CD14-positive monocyte (primary cell): ENCODE measurements at regions of chr9 and their contacts with region 1.

Region 1: DNA sequence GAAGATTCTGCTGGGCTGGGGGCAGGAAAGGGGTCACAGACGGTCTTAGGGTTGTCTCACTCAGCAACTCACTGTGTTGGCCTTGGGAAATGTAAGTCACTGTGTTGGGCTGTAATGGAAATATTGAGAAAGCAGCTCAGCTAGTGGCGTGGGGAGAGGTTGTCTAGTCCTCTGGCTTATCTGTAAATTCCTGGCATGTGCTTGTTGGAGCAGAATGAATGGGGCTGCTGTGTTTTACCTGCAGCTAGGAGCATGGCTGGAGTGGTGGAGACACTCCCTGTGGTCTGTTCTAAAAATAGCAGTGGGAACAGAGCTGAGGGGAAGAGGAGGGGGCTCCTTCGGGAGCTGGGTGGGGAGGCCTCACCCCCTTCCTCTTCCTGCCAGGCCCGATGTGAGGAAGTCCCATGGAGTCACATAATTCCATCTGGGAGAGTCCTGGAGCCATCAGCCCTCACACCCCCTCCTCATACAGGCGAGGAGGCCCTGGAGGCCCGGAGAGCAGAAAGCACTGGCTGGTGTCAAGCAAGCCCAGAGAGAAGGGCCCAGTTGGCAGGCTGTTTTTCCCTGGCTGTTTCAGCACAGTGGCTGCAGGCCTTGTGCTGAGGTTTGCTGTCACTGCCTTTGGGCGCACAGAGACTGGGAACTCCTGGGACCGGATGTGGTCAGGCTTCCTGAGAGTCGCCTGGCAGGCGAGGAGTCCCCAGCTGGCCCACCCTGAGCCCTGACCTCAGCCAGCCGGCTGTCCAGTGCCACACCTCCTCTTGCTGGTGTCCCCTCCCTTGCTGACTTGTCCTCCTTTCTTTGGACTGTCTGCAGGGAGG is 84.9 kb downstream of the RGS3 start:
- DNase-seq: peak; percentile 19 to 68 (median 44)
- H3K4me3 ChIP-seq: peak overlapping the region in 1 of 3 experiments; percentile 8
- H3K4me3 Mint-ChIP-seq: peak overlapping the region; percentile 49 to 67
- H3K27ac ChIP-seq: peak overlapping the region; percentile 22 to 63
- H3K27ac Mint-ChIP-seq: peak overlapping the region in 6 of 7 donors; percentile 29 to 85 (median 72)
- H3K4me1 ChIP-seq: peaks cover 19 to 21% of the 10 kb centered on the region in 2 donors
- H3K4me1 Mint-ChIP-seq: peaks cover 24% of the 10 kb centered on the region
- H3K27me3 ChIP-seq: no peaks in the 10 kb centered on the region
- H3K27me3 Mint-ChIP-seq: peaks cover 0 to 1% (median 0%) of the 10 kb centered on the region in 3 donors
- CTCF ChIP-seq: no peak

Region 2: GRCh38 chr9:113446323-113446740 is 102.1 kb before region 1 on chr9:
- intact Hi-C with region 1: no loop called
- DNase-seq: peak in 2 of 3 donors; percentile 25 to 52
- H3K4me3 ChIP-seq: no peak overlapping the region
- H3K4me3 Mint-ChIP-seq: no peak overlapping the region
- H3K27ac ChIP-seq: no peak overlapping the region
- H3K27ac Mint-ChIP-seq: no peak overlapping the region
- H3K4me1 ChIP-seq: no peaks in the 10 kb centered on the region
- H3K4me1 Mint-ChIP-seq: no peaks in the 10 kb centered on the region
- H3K27me3 ChIP-seq: no peaks in the 10 kb centered on the region
- H3K27me3 Mint-ChIP-seq: no peaks in the 10 kb centered on the region
- CTCF ChIP-seq: peak; percentile 87

Region 3: GRCh38 chr9:113474360-113475028 is 73.9 kb before region 1 on chr9:
- intact Hi-C with region 1: loop called in 1 of 2 experiments (anchors 5 kb)
- DNase-seq: no peak
- H3K4me3 ChIP-seq: no peak overlapping the region
- H3K4me3 Mint-ChIP-seq: no peak overlapping the region
- H3K27ac ChIP-seq: no peak overlapping the region
- H3K27ac Mint-ChIP-seq: no peak overlapping the region
- H3K4me1 ChIP-seq: no peaks in the 10 kb centered on the region
- H3K4me1 Mint-ChIP-seq: no peaks in the 10 kb centered on the region
- H3K27me3 ChIP-seq: no peaks in the 10 kb centered on the region
- H3K27me3 Mint-ChIP-seq: peaks cover 0 to 2% (median 2%) of the 10 kb centered on the region in 3 donors
- CTCF ChIP-seq: no peak

Region 4: DNA sequence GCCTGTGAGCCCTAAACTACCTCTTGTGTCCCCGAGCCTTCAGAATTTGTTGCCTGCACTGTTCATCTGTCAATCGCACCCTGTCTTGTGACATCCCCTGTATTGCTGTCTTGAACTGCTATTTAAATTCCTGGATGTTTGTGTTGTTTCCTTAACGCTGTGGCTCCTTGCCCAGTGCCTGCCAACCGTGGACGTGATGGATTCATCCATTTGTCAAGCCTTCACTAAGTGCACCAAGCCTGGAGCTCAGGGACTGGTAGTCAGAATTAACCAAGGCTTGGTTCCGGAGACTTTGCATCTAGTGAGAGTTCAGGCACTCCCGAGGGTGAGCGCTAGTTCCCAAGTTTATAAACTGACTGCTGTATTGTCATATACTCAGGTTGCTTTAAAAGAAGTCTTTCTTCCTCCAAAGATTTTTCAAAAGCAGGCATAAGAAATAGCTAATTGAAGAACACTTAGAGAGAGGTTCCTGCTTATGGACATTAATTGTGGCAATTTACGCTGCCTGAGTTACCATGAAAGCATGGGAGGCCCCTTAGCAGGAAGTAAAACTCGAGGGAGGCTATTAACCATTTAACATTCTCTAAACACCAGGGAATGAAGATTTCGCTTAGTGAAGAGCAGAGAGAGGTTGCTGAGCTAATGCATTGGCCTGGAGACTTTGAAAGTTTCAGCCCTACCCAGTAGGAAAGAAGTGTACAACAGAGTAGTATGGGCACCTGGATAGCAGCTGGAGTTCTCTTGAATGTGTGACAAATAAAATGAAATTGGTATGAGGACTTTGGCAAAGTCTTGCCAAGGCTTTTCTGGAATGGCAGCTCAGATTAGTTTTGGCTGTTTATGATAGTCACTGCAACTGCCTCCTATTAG is 55.9 kb before region 1 on chr9:
- intact Hi-C with region 1: no loop called
- DNase-seq: no peak
- H3K4me3 ChIP-seq: no peak overlapping the region
- H3K4me3 Mint-ChIP-seq: no peak overlapping the region
- H3K27ac ChIP-seq: no peak overlapping the region
- H3K27ac Mint-ChIP-seq: no peak overlapping the region
- H3K4me1 ChIP-seq: peaks cover 3 to 10% of the 10 kb centered on the region in 2 donors
- H3K4me1 Mint-ChIP-seq: peaks cover 11% of the 10 kb centered on the region
- H3K27me3 ChIP-seq: no peaks in the 10 kb centered on the region
- H3K27me3 Mint-ChIP-seq: no peaks in the 10 kb centered on the region
- CTCF ChIP-seq: no peak

Region 5: DNA sequence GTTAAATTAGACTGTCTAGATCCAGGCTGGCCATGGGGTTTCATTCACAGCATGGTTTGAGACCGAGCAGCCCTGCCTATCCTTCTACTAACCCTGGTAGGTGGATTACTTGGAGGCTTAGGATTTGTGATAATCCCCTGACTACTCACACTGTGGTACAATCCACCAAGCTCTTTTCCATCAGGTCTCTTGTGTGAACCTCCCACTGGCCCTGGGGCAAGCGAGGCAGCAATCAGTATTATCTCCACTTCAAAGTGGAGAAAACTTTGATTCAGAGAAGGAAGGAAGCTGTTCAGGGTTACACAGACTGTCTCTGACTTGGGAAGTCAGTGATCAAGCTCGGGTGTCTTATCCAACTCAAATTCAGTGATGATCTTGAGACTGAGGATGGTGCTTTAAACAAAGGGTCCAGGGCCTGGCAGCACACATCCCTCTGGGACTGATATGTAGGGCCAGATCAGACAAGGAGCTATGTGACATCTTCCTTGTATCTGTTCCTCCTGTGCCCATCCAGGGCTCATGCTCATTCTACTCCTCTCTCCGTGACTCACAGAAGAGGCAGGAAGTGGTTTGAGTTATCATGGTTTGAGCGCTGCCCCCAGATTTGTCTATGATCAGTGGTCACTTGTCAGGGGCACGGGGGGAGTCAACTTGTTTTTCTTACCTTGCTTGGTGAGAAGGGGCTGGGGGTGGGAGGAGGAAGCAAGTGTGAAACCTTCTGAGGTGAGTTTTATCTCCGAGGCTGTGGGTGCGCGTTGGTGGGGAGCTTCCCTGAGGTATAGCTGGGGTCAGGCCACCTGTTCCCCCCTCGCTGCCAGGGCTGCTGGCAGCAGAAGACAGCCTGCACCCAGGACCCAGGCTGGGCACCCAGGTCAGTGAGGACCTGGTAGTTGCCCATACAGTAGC is 36.3 kb before region 1 on chr9:
- intact Hi-C with region 1: no loop called
- DNase-seq: peak; percentile 33 to 61 (median 41)
- H3K4me3 ChIP-seq: no peak overlapping the region
- H3K4me3 Mint-ChIP-seq: peak overlapping the region in 1 of 2 donors; percentile 69
- H3K27ac ChIP-seq: no peak overlapping the region
- H3K27ac Mint-ChIP-seq: peak overlapping the region in 5 of 7 donors; percentile 2 to 58 (median 18)
- H3K4me1 ChIP-seq: peaks cover 10 to 16% of the 10 kb centered on the region in 2 donors
- H3K4me1 Mint-ChIP-seq: peaks cover 20% of the 10 kb centered on the region
- H3K27me3 ChIP-seq: no peaks in the 10 kb centered on the region
- H3K27me3 Mint-ChIP-seq: peaks cover 0 to 1% (median 0%) of the 10 kb centered on the region in 3 donors
- CTCF ChIP-seq: no peak